ENCODE measurements at regions of chr11 and their contacts with region 1.

Region 1: DNA sequence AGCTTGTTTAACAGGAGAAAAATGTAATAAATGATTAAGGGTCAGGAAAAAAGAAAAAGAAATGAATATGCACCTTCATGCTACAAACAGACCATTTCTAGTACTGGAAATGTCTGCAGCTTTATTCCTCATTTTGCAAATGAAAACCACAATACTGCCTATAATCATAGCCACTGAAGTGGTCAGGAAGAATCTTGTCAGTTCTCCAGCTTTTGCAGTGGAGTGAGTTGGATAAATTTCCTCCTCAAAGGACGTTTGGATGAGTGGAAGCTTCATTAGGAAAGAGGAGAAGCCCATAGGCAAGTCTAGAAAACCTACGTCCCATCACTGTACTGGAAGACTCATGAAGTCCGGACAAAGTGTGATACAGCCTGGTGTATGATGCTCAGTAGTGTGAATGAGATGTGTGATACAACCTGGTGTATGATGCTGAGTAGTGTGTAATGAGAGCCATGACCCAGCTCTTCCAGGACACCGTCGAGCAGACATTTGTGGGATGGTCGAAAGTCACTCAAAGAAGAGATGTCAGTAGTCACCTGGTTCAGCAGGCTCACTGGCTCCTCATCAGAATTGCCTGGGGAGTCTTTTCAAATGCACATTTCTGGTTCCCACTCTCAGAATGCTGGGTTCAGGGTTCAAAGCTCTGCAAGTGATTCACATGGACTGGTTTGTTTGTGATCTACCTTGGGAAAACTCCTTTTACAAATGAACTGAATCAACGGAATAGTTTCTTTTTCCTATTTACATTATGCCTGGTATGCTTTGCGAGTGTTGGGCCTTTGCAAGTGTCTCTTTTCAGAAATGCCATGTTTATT is 101.3 kb downstream of the PDHX start:
- DNase-seq: no peak
- H3K4me3 Mint-ChIP-seq: no peak overlapping the region
- H3K27ac Mint-ChIP-seq: no peak overlapping the region
- H3K4me1 Mint-ChIP-seq: peaks cover 16% of the 10 kb centered on the region
- H3K27me3 Mint-ChIP-seq: peaks cover 10% of the 10 kb centered on the region

Region 2: GRCh38 chr11:35030716-35031213 is 13.0 kb after region 1 on chr11:
- CTCF ChIA-PET with region 1: interaction called, 17 read pairs
- POLR2A ChIA-PET with region 1: no interaction called
- DNase-seq: no peak
- H3K4me3 Mint-ChIP-seq: peak overlapping the region; percentile 12
- H3K27ac Mint-ChIP-seq: peak overlapping the region; percentile 78
- H3K4me1 Mint-ChIP-seq: peaks cover 52% of the 10 kb centered on the region
- H3K27me3 Mint-ChIP-seq: peaks cover 2% of the 10 kb centered on the region